ENCODE measurements at regions of chr16 and their contacts with region 1.

Region 1: GRCh38 chr16:29848420-29849297 is 14.4 kb downstream of the CDIPT start:
- DNase-seq: peak; percentile 86
- ATAC-seq: peak; percentile 79
- H3K4me3 Mint-ChIP-seq: no peak overlapping the region
- H3K27ac Mint-ChIP-seq: no peak overlapping the region
- H3K4me1 Mint-ChIP-seq: peaks cover 10% of the 10 kb centered on the region
- H3K27me3 Mint-ChIP-seq: no peaks in the 10 kb centered on the region; the same call in 1 of the 2 replicates
- CTCF ChIP-seq: peak; percentile 78

Region 2: GRCh38 chr16:29694384-29695195 is 154.1 kb before region 1 on chr16:
- CTCF ChIA-PET with region 1: interaction called, 17 read pairs
- POLR2A ChIA-PET with region 1: no interaction called
- DNase-seq: no peak
- ATAC-seq: no peak
- H3K4me3 Mint-ChIP-seq: no peak overlapping the region
- H3K27ac Mint-ChIP-seq: no peak overlapping the region
- H3K4me1 Mint-ChIP-seq: peaks cover 17% of the 10 kb centered on the region
- H3K27me3 Mint-ChIP-seq: no peaks in the 10 kb centered on the region
- CTCF ChIP-seq: no peak

Region 3: DNA sequence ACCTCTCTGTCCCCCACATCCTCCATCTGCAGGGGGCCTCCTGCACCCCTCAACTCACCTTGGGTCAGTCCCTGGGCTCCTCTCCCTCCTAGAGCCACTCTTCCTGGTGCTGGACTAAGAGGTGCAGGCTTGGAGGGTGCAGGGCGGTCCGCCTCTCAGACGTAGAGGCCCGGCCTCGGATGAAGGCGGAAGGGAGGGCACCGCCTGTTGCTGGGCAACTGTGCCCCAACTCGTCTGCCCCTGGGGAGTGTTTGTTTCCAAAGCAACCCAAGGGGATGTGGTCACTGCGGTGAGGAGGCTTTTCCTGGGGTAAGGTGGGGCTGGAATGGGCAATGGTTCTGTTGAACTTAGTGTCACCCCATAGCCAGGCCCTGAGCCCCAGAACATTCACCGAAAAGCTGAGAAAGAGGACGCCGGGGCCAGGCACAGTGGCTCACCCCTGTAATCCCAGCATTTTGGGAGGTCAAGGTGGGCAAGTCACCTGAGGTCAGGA is 102.8 kb before region 1 on chr16 and contains the start of gene C16orf54:
- CTCF ChIA-PET with region 1: no interaction called
- POLR2A ChIA-PET with region 1: no interaction called
- DNase-seq: no peak
- ATAC-seq: peak; percentile 5
- H3K4me3 Mint-ChIP-seq: no peak within 1 kb of the TSS
- H3K27ac Mint-ChIP-seq: peak within 1 kb of the TSS; percentile 45; the same call in 1 of the 2 replicates
- H3K4me1 Mint-ChIP-seq: peaks cover 16% of the 10 kb centered on the region
- H3K27me3 Mint-ChIP-seq: peaks cover 8% of the 10 kb centered on the region
- CTCF ChIP-seq: no peak
- total RNA-seq, gene C16orf54: 0.09 to 0.14 TPM (median 0.11 TPM) in 3 replicates

Region 4: GRCh38 chr16:29784901-29785500 is 63.7 kb before region 1 on chr16:
- CTCF ChIA-PET with region 1: interaction called, 17 read pairs
- POLR2A ChIA-PET with region 1: no interaction called
- DNase-seq: peak; percentile 94
- ATAC-seq: peak; percentile 95
- H3K4me3 Mint-ChIP-seq: peak overlapping the region; percentile 57
- H3K27ac Mint-ChIP-seq: no peak overlapping the region
- H3K4me1 Mint-ChIP-seq: peaks cover 26% of the 10 kb centered on the region
- H3K27me3 Mint-ChIP-seq: peaks cover 53% of the 10 kb centered on the region
- CTCF ChIP-seq: peak; percentile 69

Region 5: GRCh38 chr16:29815793-29816693 is 32.6 kb before region 1 on chr16 and contains the start of gene PAGR1:
- CTCF ChIA-PET with region 1: interaction called, 81 read pairs
- POLR2A ChIA-PET with region 1: interaction called, 7 read pairs
- DNase-seq: peak; percentile 98
- ATAC-seq: peak; percentile 56
- H3K4me3 Mint-ChIP-seq: peak within 1 kb of the TSS; percentile 94
- H3K27ac Mint-ChIP-seq: peak within 1 kb of the TSS; percentile 100
- H3K4me1 Mint-ChIP-seq: peaks cover 56% of the 10 kb centered on the region
- H3K27me3 Mint-ChIP-seq: no peaks in the 10 kb centered on the region; the same call in 1 of the 2 replicates
- CTCF ChIP-seq: peak; percentile 81
- total RNA-seq, gene PAGR1: 60.1 to 69.0 TPM (median 66.8 TPM) in 3 replicates

Region 6: GRCh38 chr16:29862884-29863668 is 14.4 kb after region 1 on chr16 and contains the start of gene CDIPT:
- CTCF ChIA-PET with region 1: interaction called, 32 read pairs
- POLR2A ChIA-PET with region 1: interaction called, 5 read pairs
- DNase-seq: peak; percentile 94
- ATAC-seq: peak; percentile 98
- H3K4me3 Mint-ChIP-seq: peak within 1 kb of the TSS; percentile 98
- H3K27ac Mint-ChIP-seq: peak within 1 kb of the TSS; percentile 100
- H3K4me1 Mint-ChIP-seq: peaks cover 8% of the 10 kb centered on the region
- H3K27me3 Mint-ChIP-seq: no peaks in the 10 kb centered on the region
- CTCF ChIP-seq: no peak
- total RNA-seq, gene CDIPT: 70.7 to 71.7 TPM (median 70.9 TPM) in 3 replicates

Region 7: GRCh38 chr16:29973384-29974246 is 125.0 kb after region 1 on chr16 and contains the start of gene TAOK2:
- CTCF ChIA-PET with region 1: interaction called, 13 read pairs
- POLR2A ChIA-PET with region 1: no interaction called
- DNase-seq: peak; percentile 100
- ATAC-seq: peak; percentile 97
- H3K4me3 Mint-ChIP-seq: peak within 1 kb of the TSS; percentile 92
- H3K27ac Mint-ChIP-seq: peak within 1 kb of the TSS; percentile 82
- H3K4me1 Mint-ChIP-seq: peaks cover 27% of the 10 kb centered on the region
- H3K27me3 Mint-ChIP-seq: peaks cover 21% of the 10 kb centered on the region
- CTCF ChIP-seq: no peak
- total RNA-seq, gene TAOK2: 38.3 to 42.4 TPM (median 39.2 TPM) in 3 replicates

Region 8: GRCh38 chr16:29985271-29985811 is 136.7 kb after region 1 on chr16:
- CTCF ChIA-PET with region 1: no interaction called
- POLR2A ChIA-PET with region 1: no interaction called
- DNase-seq: no peak
- ATAC-seq: no peak
- H3K4me3 Mint-ChIP-seq: no peak overlapping the region
- H3K27ac Mint-ChIP-seq: no peak overlapping the region
- H3K4me1 Mint-ChIP-seq: no peaks in the 10 kb centered on the region
- H3K27me3 Mint-ChIP-seq: no peaks in the 10 kb centered on the region
- CTCF ChIP-seq: no peak

Region 9: GRCh38 chr16:30173054-30173453 is 324.4 kb after region 1 on chr16:
- CTCF ChIA-PET with region 1: no interaction called
- POLR2A ChIA-PET with region 1: no interaction called
- DNase-seq: no peak
- ATAC-seq: no peak
- H3K4me3 Mint-ChIP-seq: no peak overlapping the region
- H3K27ac Mint-ChIP-seq: no peak overlapping the region
- H3K4me1 Mint-ChIP-seq: no peaks in the 10 kb centered on the region
- H3K27me3 Mint-ChIP-seq: peaks cover 13% of the 10 kb centered on the region
- CTCF ChIP-seq: no peak

Measured in WTC11 (cell line).